Calu3 (cell line): ENCODE measurements at regions of chr6 and their contacts with region 1.

Region 1: GRCh38 chr6:27126815-27127537 is 120.5 kb upstream of the PRSS16 start:
- DNase-seq: peak; percentile 90
- H3K4me3 Mint-ChIP-seq: peak overlapping the region; percentile 66
- H3K27ac Mint-ChIP-seq: peak overlapping the region; percentile 65
- H3K4me1 Mint-ChIP-seq: peaks cover 18% of the 10 kb centered on the region
- H3K27me3 Mint-ChIP-seq: no peaks in the 10 kb centered on the region
- CTCF ChIP-seq: peak; percentile 85

Region 2: GRCh38 chr6:27157459-27158315 is 30.7 kb after region 1 on chr6:
- CTCF ChIA-PET with region 1: interaction called, 14 read pairs
- intact Hi-C with region 1: loop called (anchors 1 kb)
- DNase-seq: peak; percentile 79
- H3K4me3 Mint-ChIP-seq: peak overlapping the region; percentile 81
- H3K27ac Mint-ChIP-seq: peak overlapping the region; percentile 79
- H3K4me1 Mint-ChIP-seq: peaks cover 27% of the 10 kb centered on the region
- H3K27me3 Mint-ChIP-seq: no peaks in the 10 kb centered on the region
- CTCF ChIP-seq: peak; percentile 51

Region 3: GRCh38 chr6:27168586-27169443 is 41.8 kb after region 1 on chr6:
- CTCF ChIA-PET with region 1: no interaction called
- intact Hi-C with region 1: no loop called
- DNase-seq: peak; percentile 23
- H3K4me3 Mint-ChIP-seq: no peak overlapping the region
- H3K27ac Mint-ChIP-seq: peak overlapping the region; percentile 77
- H3K4me1 Mint-ChIP-seq: peaks cover 18% of the 10 kb centered on the region
- H3K27me3 Mint-ChIP-seq: no peaks in the 10 kb centered on the region
- CTCF ChIP-seq: no peak